HEK293 (cell line): ENCODE measurements at regions of chr18 and their contacts with region 1.

Region 1: GRCh38 chr18:3297025-3297984 is 35.4 kb downstream of the MYL12B start:
- H3K4me3 ChIP-seq: peak overlapping the region; percentile 59
- H3K27ac ChIP-seq: peak overlapping the region; percentile 85
- H3K4me1 ChIP-seq: peaks cover 4% of the 10 kb centered on the region; the same call in 1 of the 2 replicates
- CTCF ChIP-seq: peak; percentile 91

Region 2: DNA sequence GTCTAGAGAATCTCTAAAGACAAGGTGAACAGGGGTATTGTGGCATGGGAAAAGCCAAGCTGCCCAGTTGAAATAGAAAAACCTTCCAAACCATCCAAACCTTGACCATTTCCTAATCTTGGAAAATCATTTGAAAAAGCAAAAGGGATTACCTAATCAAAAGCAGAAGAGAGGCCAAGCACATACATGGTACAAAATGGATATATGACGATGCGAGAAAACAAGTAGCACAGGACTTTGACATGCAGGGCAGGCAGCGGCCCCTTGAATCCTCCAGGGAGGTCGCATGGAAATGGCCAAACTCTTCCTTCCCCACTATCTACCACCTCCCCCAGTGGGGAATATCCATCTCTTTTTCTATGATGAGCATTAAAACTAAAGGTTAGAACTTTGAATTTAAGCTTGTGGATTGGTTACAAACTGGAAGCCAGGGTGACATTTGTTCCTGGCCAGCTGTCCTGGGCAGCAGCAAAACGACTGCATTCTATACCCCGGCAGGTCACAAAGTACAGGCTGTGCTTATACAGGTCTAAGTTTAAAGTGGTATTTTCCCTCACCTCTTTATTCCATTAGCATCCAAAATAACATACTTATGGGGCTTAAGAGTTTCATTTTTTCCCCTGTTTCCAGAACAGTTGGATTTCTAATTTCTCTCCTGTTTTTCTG is 102.2 kb before region 1 on chr18:
- CTCF ChIA-PET with region 1: no interaction called
- POLR2A ChIA-PET with region 1: no interaction called
- H3K4me3 ChIP-seq: no peak overlapping the region
- H3K27ac ChIP-seq: no peak overlapping the region
- H3K4me1 ChIP-seq: no peaks in the 10 kb centered on the region
- CTCF ChIP-seq: no peak

Region 3: DNA sequence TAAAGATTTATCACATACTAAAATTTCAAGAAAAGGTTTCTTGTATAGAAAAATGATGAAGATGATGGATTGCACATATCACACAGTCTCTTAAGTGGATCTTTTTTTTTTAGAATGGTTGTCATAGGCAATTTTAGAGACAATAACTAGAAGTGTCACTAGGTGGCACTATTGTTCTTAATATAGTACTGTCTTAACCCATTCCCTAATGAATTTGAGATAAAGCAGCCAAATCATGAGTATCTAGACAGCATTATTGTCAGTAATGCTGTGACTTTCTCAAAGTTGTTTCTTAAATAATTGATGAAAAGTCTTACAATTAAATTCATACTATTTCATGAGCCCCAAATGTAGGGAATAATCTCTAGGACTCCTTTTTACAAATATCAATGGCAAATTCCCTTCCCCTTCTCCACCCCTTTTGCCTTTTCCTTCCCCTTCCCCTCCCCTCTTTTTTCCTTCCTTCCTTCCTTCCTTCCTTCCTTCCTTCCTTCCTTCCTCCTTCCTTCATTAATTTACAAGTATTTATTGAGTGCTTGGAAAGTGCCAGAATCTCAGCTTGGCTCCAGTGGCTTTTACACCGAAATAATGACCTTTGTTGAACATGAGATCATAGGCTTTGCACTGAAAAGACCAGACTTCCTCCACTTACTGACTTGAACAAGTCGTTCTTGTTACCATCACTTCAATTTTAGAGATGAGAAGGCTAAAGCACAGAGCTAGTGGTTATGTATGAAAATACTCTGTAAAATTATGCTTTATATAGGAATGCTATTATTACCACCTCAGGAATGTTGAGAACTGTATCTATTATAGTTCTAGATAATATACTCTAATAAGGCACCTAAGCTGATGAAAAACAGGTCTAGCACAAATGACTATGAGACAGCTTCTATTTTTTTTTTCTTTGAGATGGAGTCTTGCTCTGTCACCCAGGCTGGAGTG is 15.6 kb before region 1 on chr18:
- CTCF ChIA-PET with region 1: interaction called, 11 read pairs
- POLR2A ChIA-PET with region 1: interaction called, 3 read pairs
- H3K4me3 ChIP-seq: no peak overlapping the region
- H3K27ac ChIP-seq: no peak overlapping the region
- H3K4me1 ChIP-seq: no peaks in the 10 kb centered on the region
- CTCF ChIP-seq: peak; percentile 36; the same call in 1 of the 2 replicates

Region 4: DNA sequence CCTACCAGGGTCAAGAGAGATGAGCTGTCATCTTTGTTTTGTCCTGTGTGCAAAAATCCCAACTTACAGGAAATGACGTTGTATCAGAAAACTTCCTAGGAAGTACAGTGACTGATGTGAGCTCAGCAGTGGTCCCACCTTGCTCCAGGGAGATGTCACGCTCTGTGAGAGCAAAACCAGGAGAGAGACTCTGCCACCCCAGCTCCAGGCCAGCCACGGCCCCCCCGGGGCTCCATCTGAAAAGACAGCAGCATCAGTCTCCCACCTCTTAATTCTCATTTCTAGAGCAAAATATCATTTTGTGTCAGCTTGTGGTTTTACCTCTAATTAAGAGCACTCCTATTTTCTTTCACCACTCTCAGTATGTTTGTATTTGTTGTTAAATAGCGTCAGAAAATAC is 22.1 kb after region 1 on chr18:
- CTCF ChIA-PET with region 1: interaction called, 21 read pairs
- POLR2A ChIA-PET with region 1: interaction called, 8 read pairs
- H3K4me3 ChIP-seq: no peak overlapping the region
- H3K27ac ChIP-seq: no peak overlapping the region
- H3K4me1 ChIP-seq: peaks cover 15% of the 10 kb centered on the region
- CTCF ChIP-seq: no peak

Region 5: GRCh38 chr18:3329471-3329870 is 32.2 kb after region 1 on chr18:
- CTCF ChIA-PET with region 1: interaction called, 16 read pairs
- POLR2A ChIA-PET with region 1: interaction called, 3 read pairs
- H3K4me3 ChIP-seq: no peak overlapping the region
- H3K27ac ChIP-seq: no peak overlapping the region
- H3K4me1 ChIP-seq: no peaks in the 10 kb centered on the region
- CTCF ChIP-seq: no peak

Region 6: DNA sequence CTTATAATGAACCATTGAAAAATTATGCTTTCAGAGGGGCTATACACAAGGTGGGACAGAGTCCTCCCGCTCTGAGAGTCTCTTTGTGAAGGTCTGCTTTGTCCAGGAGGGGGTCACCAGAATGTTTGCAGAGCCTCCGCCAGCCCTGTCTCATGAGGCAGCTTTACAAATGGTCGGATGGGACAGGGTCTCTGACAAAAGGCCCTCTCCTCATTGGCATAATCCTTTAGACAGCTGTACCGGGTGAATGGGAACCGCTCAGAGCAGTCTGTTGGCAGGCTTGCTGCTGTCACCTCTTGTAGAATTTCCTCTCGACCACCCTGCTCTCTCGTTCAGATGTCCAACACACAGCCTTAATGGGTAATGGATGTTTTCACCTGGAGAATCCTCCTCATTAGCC is 112.5 kb after region 1 on chr18:
- CTCF ChIA-PET with region 1: interaction called, 14 read pairs
- POLR2A ChIA-PET with region 1: interaction called, 8 read pairs
- H3K4me3 ChIP-seq: no peak overlapping the region
- H3K27ac ChIP-seq: peak overlapping the region; percentile 52; the same call in 1 of the 2 replicates
- H3K4me1 ChIP-seq: peaks cover 8% of the 10 kb centered on the region
- CTCF ChIP-seq: no peak